Endothelial cell of umbilical vein (primary cell): ENCODE measurements at regions of chr12 and their contacts with region 1.

Region 1: GRCh38 chr12:4857472-4858291 is 52.0 kb upstream of the KCNA1 start:
- DNase-seq: peak; percentile 63
- H3K4me3 ChIP-seq: no peak overlapping the region
- H3K27ac ChIP-seq: no peak overlapping the region
- H3K4me1 ChIP-seq: no peaks in the 10 kb centered on the region
- H3K27me3 ChIP-seq: peaks cover 0 to 6% of the 10 kb centered on the region in 2 experiments
- CTCF ChIP-seq: peak; percentile 81 to 92
- POLR2A ChIP-seq: no peak

Region 2: GRCh38 chr12:4833524-4833923 is 24.2 kb before region 1 on chr12:
- CTCF ChIA-PET with region 1: interaction called, 19 read pairs
- POLR2A ChIA-PET with region 1: no interaction called
- dilution Hi-C with region 1: no loop called
- intact Hi-C with region 1: no loop called
- DNase-seq: no peak
- H3K4me3 ChIP-seq: no peak overlapping the region
- H3K27ac ChIP-seq: no peak overlapping the region
- H3K4me1 ChIP-seq: no peaks in the 10 kb centered on the region
- H3K27me3 ChIP-seq: peaks cover 0 to 2% of the 10 kb centered on the region in 2 experiments
- CTCF ChIP-seq: no peak
- POLR2A ChIP-seq: no peak

Region 3: GRCh38 chr12:4908684-4909409 is 51.2 kb after region 1 on chr12:
- CTCF ChIA-PET with region 1: interaction called, 17 read pairs
- POLR2A ChIA-PET with region 1: no interaction called
- dilution Hi-C with region 1: no loop called
- intact Hi-C with region 1: no loop called
- DNase-seq: no peak
- H3K4me3 ChIP-seq: no peak overlapping the region
- H3K27ac ChIP-seq: no peak overlapping the region
- H3K4me1 ChIP-seq: peaks cover 2% of the 10 kb centered on the region
- H3K27me3 ChIP-seq: peaks cover 42 to 50% of the 10 kb centered on the region in 2 experiments
- CTCF ChIP-seq: no peak
- POLR2A ChIP-seq: no peak

Region 4: GRCh38 chr12:4997939-4998338 is 140.3 kb after region 1 on chr12:
- CTCF ChIA-PET with region 1: interaction called, 63 read pairs
- POLR2A ChIA-PET with region 1: no interaction called
- dilution Hi-C with region 1: no loop called
- intact Hi-C with region 1: loop called (anchors 1 kb)
- DNase-seq: peak; percentile 17
- H3K4me3 ChIP-seq: no peak overlapping the region
- H3K27ac ChIP-seq: no peak overlapping the region
- H3K4me1 ChIP-seq: no peaks in the 10 kb centered on the region
- H3K27me3 ChIP-seq: no peaks in the 10 kb centered on the region
- CTCF ChIP-seq: no peak
- POLR2A ChIP-seq: no peak

Region 5: GRCh38 chr12:5003020-5003666 is 145.5 kb after region 1 on chr12:
- CTCF ChIA-PET with region 1: interaction called, 63 read pairs
- POLR2A ChIA-PET with region 1: no interaction called
- dilution Hi-C with region 1: no loop called
- intact Hi-C with region 1: loop called (anchors 1 kb)
- DNase-seq: peak; percentile 45
- H3K4me3 ChIP-seq: no peak overlapping the region
- H3K27ac ChIP-seq: no peak overlapping the region
- H3K4me1 ChIP-seq: no peaks in the 10 kb centered on the region
- H3K27me3 ChIP-seq: no peaks in the 10 kb centered on the region
- CTCF ChIP-seq: peak; percentile 77 to 95
- POLR2A ChIP-seq: no peak

Region 6: GRCh38 chr12:5083955-5084849 is 226.5 kb after region 1 on chr12:
- CTCF ChIA-PET with region 1: interaction called, 94 read pairs
- POLR2A ChIA-PET with region 1: no interaction called
- dilution Hi-C with region 1: no loop called
- intact Hi-C with region 1: loop called (anchors 1 kb)
- DNase-seq: peak; percentile 59
- H3K4me3 ChIP-seq: no peak overlapping the region
- H3K27ac ChIP-seq: no peak overlapping the region
- H3K4me1 ChIP-seq: no peaks in the 10 kb centered on the region
- H3K27me3 ChIP-seq: peaks cover 0 to 6% of the 10 kb centered on the region in 2 experiments
- CTCF ChIP-seq: peak; percentile 56 to 58
- POLR2A ChIP-seq: no peak

Region 7: GRCh38 chr12:6241495-6241894 is 1383.8 kb after region 1 on chr12:
- CTCF ChIA-PET with region 1: no interaction called
- POLR2A ChIA-PET with region 1: no interaction called
- dilution Hi-C with region 1: no loop called
- intact Hi-C with region 1: no loop called
- DNase-seq: peak; percentile 74
- H3K4me3 ChIP-seq: no peak overlapping the region
- H3K27ac ChIP-seq: no peak overlapping the region
- H3K4me1 ChIP-seq: peaks cover 9% of the 10 kb centered on the region
- H3K27me3 ChIP-seq: no peaks in the 10 kb centered on the region
- CTCF ChIP-seq: no peak
- POLR2A ChIP-seq: no peak